ENCODE measurements at regions of chr10 and their contacts with region 1.

Region 1: GRCh38 chr10:73997787-73998622 is at the start of gene VCL:
- DNase-seq: peak; percentile 96 to 99
- H3K4me3 ChIP-seq: peak within 1 kb of the TSS; percentile 84 to 99 (median 96)
- H3K27ac ChIP-seq: peak within 1 kb of the TSS; percentile 98
- H3K4me1 ChIP-seq: peaks cover 0 to 6% (median 3%) of the 10 kb centered on the region in 4 experiments; a peak in 6 of 7 replicates
- H3K27me3 ChIP-seq: no peaks in the 10 kb centered on the region
- CTCF ChIP-seq: no peak
- EP300 ChIP-seq: peak in 1 of 2 experiments; percentile 81; a peak in 1 of 3 replicates
- POLR2A ChIP-seq: peak; percentile 97 to 100
- RAD21 ChIP-seq: no peak
- total RNA-seq, gene VCL: 361 and 377 TPM in 2 replicates

Region 2: GRCh38 chr10:73886085-73886529 is 111.9 kb before region 1 on chr10:
- CTCF ChIA-PET with region 1: interaction called, 15 read pairs
- POLR2A ChIA-PET with region 1: interaction called, 29 read pairs
- DNase-seq: peak in 1 of 2 experiments; percentile 81
- H3K4me3 ChIP-seq: no peak overlapping the region
- H3K27ac ChIP-seq: no peak overlapping the region
- H3K4me1 ChIP-seq: peaks cover 1 to 9% (median 5%) of the 10 kb centered on the region in 4 experiments; a peak in 5 of 7 replicates
- H3K27me3 ChIP-seq: no peaks in the 10 kb centered on the region
- CTCF ChIP-seq: peak; percentile 85 to 96 (median 95)
- EP300 ChIP-seq: no peak
- POLR2A ChIP-seq: no peak
- RAD21 ChIP-seq: peak; percentile 97 to 99

Region 3: GRCh38 chr10:73920089-73920488 is 77.9 kb before region 1 on chr10:
- CTCF ChIA-PET with region 1: no interaction called
- POLR2A ChIA-PET with region 1: interaction called, 16 read pairs
- DNase-seq: no peak
- H3K4me3 ChIP-seq: no peak overlapping the region
- H3K27ac ChIP-seq: peak overlapping the region; percentile 34; the same call in 1 of the 2 replicates
- H3K4me1 ChIP-seq: peaks cover 3 to 10% (median 4%) of the 10 kb centered on the region in 4 experiments
- H3K27me3 ChIP-seq: no peaks in the 10 kb centered on the region
- CTCF ChIP-seq: no peak
- EP300 ChIP-seq: no peak
- POLR2A ChIP-seq: no peak
- RAD21 ChIP-seq: no peak

Region 4: GRCh38 chr10:73950155-73950948 is 47.7 kb before region 1 on chr10:
- CTCF ChIA-PET with region 1: interaction called, 4 read pairs
- POLR2A ChIA-PET with region 1: interaction called, 14 read pairs
- DNase-seq: peak in 1 of 2 experiments; percentile 64
- H3K4me3 ChIP-seq: no peak overlapping the region
- H3K27ac ChIP-seq: no peak overlapping the region
- H3K4me1 ChIP-seq: peaks cover 0 to 4% (median under 1%) of the 10 kb centered on the region in 4 experiments; a peak in 2 of 7 replicates
- H3K27me3 ChIP-seq: no peaks in the 10 kb centered on the region
- CTCF ChIP-seq: peak in 1 of 3 experiments; percentile 9; a peak in 1 of 4 replicates
- EP300 ChIP-seq: no peak
- POLR2A ChIP-seq: no peak
- RAD21 ChIP-seq: no peak; a peak in 1 of 4 replicates

Region 5: DNA sequence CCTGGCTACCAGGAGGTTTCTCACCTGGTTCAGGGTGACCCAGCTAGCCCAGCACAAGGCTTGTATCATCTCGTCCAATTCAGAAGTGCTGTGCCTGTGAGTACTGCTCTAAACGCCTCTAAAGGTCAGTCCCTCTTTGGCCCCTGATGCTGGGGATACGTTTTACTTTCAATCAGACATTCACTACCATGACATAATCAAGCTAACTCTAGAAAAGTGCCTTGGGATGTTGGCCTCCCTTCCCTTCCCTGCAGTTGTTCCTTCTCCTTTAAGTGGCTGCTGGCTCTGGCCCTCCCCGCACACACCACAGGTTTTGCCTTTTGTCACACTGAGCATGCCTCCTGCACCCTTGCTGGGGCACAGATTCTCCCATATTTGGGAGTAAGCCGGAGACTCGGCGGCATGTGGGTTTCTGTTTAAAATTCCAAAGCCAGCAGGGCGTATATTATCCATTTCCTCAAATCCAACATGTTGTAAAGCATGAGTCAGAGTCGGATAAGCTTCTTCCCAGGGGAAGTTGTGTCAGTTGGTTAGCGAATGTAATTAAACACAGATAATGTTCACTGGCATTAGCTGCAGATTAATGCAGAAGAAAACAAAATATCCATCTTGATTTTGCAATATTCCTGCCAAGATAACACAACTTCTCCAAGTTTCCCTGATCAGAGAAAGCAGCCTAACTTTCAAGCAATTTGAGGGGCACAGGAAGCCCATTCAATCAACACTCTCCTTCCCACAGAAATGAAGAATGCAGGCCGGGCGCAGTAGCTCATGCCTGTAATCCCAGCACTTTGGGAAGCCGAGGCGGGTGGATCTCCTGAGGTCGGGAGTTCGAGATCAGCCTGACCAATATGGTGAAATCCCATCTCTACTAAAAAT is 31.9 kb before region 1 on chr10:
- CTCF ChIA-PET with region 1: interaction called, 10 read pairs
- POLR2A ChIA-PET with region 1: interaction called, 261 read pairs
- DNase-seq: peak; percentile 80 to 96
- H3K4me3 ChIP-seq: peak overlapping the region in 1 of 4 experiments; percentile 38; a peak in 2 of 8 replicates
- H3K27ac ChIP-seq: peak overlapping the region; percentile 98
- H3K4me1 ChIP-seq: peaks cover 18 to 38% (median 31%) of the 10 kb centered on the region in 4 experiments
- H3K27me3 ChIP-seq: no peaks in the 10 kb centered on the region
- CTCF ChIP-seq: no peak
- EP300 ChIP-seq: peak in 1 of 2 experiments; percentile 97; a peak in 1 of 3 replicates
- POLR2A ChIP-seq: peak; percentile 71 to 96
- RAD21 ChIP-seq: peak in 1 of 2 experiments; percentile 11; a peak in 1 of 4 replicates

Region 6: GRCh38 chr10:74008212-74008731 is 10.3 kb after region 1 on chr10:
- CTCF ChIA-PET with region 1: interaction called, 16 read pairs
- POLR2A ChIA-PET with region 1: interaction called, 170 read pairs
- DNase-seq: no peak
- H3K4me3 ChIP-seq: no peak overlapping the region
- H3K27ac ChIP-seq: no peak overlapping the region
- H3K4me1 ChIP-seq: peaks cover 0 to 15% (median under 1%) of the 10 kb centered on the region in 4 experiments; a peak in 3 of 7 replicates
- H3K27me3 ChIP-seq: no peaks in the 10 kb centered on the region
- CTCF ChIP-seq: no peak
- EP300 ChIP-seq: no peak
- POLR2A ChIP-seq: peak in 1 of 2 experiments; percentile 82; a peak in 1 of 3 replicates
- RAD21 ChIP-seq: no peak

Region 7: DNA sequence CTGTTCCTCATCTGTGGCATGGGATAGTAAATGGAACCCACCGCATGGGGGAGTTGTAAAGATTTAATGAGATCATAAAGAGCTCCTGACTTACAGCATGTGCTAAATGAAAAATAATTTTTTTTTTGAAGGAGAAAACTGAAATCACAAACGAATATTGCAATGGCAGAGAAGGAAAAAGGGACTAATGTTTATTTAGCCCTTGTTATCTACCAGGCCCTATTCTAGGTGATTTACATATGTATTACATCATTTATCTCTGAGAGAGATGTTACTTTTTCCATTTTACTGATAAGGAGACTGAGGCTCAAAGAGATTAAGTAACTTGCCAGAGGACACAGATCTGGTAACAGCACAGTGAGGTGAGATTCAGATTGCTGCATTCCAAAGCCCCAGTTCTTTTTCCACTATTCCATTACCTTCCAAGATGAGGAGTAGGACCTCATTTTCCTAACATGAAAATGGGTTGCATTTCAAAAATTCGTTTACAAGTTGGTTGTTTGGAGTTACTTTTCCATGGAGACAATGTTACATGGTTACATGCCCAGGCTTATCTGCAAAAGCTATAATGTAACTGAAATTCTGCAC is 28.5 kb after region 1 on chr10:
- CTCF ChIA-PET with region 1: interaction called, 11 read pairs
- POLR2A ChIA-PET with region 1: interaction called, 117 read pairs
- DNase-seq: no peak
- H3K4me3 ChIP-seq: no peak overlapping the region
- H3K27ac ChIP-seq: no peak overlapping the region
- H3K4me1 ChIP-seq: peaks cover 0 to 8% (median 2%) of the 10 kb centered on the region in 4 experiments; a peak in 5 of 7 replicates
- H3K27me3 ChIP-seq: no peaks in the 10 kb centered on the region
- CTCF ChIP-seq: no peak
- EP300 ChIP-seq: no peak
- POLR2A ChIP-seq: peak in 1 of 2 experiments; percentile 28; a peak in 1 of 3 replicates
- RAD21 ChIP-seq: no peak

Measured in H1 (cell line).